ENCODE measurements at regions of chr4 and their contacts with region 1.

Region 1: DNA sequence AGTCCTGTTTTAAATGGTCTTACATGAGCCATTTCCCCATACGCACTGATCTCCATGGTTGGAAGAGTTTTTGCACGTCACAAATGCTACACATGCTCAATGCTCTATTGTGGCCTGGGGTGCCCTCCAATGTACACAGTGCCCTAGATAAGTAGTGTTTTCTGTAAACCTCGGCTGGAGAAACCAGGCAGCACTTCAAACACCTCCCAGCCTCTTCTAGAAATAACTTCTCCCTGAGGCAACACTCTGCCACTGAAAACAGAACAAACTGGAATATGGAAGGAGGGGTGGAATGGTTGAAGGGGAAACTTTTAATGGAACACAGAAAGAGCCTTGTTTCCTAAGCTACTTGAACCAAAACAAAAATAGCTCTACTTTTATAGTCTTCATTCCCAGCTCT is 123.9 kb upstream of the CBR4 start:
- DNase-seq: no peak
- ATAC-seq: peak; percentile 12 to 34

Region 2: DNA sequence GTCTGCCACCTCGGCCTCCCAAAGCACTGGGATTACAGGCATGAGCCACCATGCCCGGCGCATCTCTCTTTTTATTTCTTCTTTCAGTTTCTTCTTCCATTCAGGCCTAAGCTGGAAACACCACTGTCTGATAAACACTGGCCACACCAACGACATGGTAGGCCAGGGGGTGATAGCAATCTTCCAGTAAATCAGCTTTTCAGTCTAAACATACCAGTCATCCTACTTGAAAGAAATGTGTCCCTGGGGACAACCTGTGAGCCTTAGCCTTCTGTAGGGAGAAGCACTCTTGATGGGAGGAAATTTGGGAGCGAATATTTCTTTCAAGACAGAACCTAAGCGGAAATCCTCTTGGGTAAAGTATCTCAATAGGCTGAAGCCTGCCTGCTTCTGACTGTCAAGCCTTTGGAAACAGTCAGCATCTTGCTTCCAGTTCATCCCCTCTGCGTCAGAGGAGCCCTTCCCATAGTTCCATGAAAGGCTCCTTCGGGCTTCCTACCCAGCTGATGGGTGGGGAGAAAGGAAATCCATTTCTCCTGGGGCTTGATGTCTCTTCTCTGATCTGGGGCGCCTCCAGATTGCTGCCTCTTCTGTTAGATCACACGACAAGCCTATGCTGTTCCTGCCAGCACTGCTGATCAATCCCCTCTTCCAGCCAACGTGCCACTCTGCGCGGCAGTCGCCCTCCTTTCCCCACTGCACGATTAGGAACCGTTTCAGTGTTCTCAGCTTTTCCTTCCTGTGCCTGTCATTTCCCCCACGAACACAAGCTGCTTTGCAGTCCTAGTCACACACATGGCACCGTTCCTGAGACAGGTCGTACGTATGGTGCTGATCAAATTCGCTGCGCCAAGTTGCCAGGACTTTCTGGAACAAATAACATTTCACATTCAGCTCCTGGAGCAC is 74.4 kb before region 1 on chr4:
- intact Hi-C with region 1: loop called in 1 of 2 experiments (anchors 5 kb)
- DNase-seq: peak; percentile 81
- ATAC-seq: peak; percentile 43 to 48

Measured in left cardiac atrium (tissue), 4 donors.